ENCODE measurements at regions of chr11 and their contacts with region 1.

Region 1: GRCh38 chr11:126318574-126319373 is 14.9 kb downstream of the DCPS start:
- H3K4me3 ChIP-seq: no peak overlapping the region
- H3K27ac ChIP-seq: no peak overlapping the region
- H3K4me1 ChIP-seq: peaks cover 9% of the 10 kb centered on the region
- CTCF ChIP-seq: no peak

Region 2: GRCh38 chr11:126355324-126355925 is 36.7 kb after region 1 on chr11 and contains the start of gene ST3GAL4:
- CTCF ChIA-PET with region 1: no interaction called
- POLR2A ChIA-PET with region 1: interaction called, 11 read pairs
- H3K4me3 ChIP-seq: peak within 1 kb of the TSS; percentile 58
- H3K27ac ChIP-seq: peak within 1 kb of the TSS; percentile 73; the same call in 1 of the 2 replicates
- H3K4me1 ChIP-seq: no peaks in the 10 kb centered on the region
- CTCF ChIP-seq: no peak

Measured in HEK293 (cell line).